Psoas muscle (tissue), 8 donors: ENCODE measurements at regions of chr2 and their contacts with region 1.

Region 1: GRCh38 chr2:121649596-121650314 is 493 bp upstream of the CLASP1 start:
- DNase-seq: peak; percentile 97 to 99
- ATAC-seq: peak; percentile 92 to 98 (median 95)
- H3K4me3 ChIP-seq: peak overlapping the region; percentile 87
- H3K27ac ChIP-seq: peak overlapping the region; percentile 96
- H3K4me1 ChIP-seq: peaks cover 49% of the 10 kb centered on the region
- H3K27me3 ChIP-seq: no peaks in the 10 kb centered on the region
- CTCF ChIP-seq: no peak

Region 2: DNA sequence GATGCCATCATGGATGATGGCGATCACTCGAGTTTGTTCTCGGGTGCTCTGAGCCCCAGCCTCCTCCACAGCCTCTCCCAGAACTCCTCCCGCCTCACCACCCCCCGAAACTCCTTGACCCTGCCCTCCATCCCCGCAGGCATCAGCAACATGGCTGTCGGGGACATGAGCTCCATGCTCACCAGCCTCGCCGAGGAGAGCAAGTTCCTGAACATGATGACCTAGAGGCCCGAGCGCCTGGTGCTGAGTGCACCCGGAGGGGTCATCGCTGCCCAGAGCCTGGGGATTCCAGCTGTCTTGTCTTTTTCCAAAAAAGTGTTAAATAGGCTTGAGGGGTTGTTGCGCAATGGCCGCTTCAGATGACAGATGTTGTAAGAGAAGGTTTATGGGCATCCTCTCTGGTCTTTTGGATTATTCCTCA is 659.3 kb before region 1 on chr2:
- intact Hi-C with region 1: no loop called
- DNase-seq: no peak
- ATAC-seq: peak in 2 of 4 donors; percentile 32 to 42
- H3K4me3 ChIP-seq: no peak overlapping the region
- H3K27ac ChIP-seq: no peak overlapping the region
- H3K4me1 ChIP-seq: no peaks in the 10 kb centered on the region
- H3K27me3 ChIP-seq: no peaks in the 10 kb centered on the region
- CTCF ChIP-seq: no peak

Region 3: DNA sequence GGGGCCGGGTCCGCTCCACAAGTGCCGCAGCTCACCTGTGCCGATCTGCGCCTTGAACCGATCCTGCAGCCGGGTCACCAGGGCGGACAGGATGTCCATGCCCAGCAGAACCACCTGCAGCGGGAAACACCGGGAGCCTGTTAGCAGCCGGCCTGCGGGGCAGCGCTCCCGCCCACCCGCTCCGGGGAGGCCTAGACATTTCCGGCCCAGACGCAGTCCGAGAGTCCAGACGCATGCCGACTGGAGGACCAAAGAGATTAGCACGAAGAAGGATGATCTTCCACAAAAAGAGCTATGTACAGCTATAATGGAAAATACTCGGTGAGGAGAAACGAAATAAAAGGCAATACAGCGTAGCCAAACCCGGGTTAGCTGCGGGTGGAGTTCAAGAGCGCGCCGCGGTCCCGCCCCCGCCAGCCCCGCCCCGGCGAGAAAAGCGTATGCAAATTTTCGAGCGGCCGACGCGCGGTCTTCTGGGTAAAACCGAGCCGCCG is 119.5 kb before region 1 on chr2:
- intact Hi-C with region 1: loop called (anchors 2 to 5 kb)
- DNase-seq: peak; percentile 84 to 92
- ATAC-seq: peak; percentile 77 to 83 (median 78)
- H3K4me3 ChIP-seq: peak overlapping the region; percentile 89
- H3K27ac ChIP-seq: peak overlapping the region; percentile 99
- H3K4me1 ChIP-seq: peaks cover 44% of the 10 kb centered on the region
- H3K27me3 ChIP-seq: no peaks in the 10 kb centered on the region
- CTCF ChIP-seq: no peak

Region 4: GRCh38 chr2:121565389-121566250 is 84.1 kb before region 1 on chr2:
- intact Hi-C with region 1: loop called in 1 of 2 experiments (anchors 5 kb)
- DNase-seq: peak; percentile 37 to 68
- ATAC-seq: peak; percentile 89 to 91 (median 90)
- H3K4me3 ChIP-seq: peak overlapping the region; percentile 43
- H3K27ac ChIP-seq: peak overlapping the region; percentile 84
- H3K4me1 ChIP-seq: peaks cover 95% of the 10 kb centered on the region
- H3K27me3 ChIP-seq: no peaks in the 10 kb centered on the region
- CTCF ChIP-seq: no peak

Region 5: DNA sequence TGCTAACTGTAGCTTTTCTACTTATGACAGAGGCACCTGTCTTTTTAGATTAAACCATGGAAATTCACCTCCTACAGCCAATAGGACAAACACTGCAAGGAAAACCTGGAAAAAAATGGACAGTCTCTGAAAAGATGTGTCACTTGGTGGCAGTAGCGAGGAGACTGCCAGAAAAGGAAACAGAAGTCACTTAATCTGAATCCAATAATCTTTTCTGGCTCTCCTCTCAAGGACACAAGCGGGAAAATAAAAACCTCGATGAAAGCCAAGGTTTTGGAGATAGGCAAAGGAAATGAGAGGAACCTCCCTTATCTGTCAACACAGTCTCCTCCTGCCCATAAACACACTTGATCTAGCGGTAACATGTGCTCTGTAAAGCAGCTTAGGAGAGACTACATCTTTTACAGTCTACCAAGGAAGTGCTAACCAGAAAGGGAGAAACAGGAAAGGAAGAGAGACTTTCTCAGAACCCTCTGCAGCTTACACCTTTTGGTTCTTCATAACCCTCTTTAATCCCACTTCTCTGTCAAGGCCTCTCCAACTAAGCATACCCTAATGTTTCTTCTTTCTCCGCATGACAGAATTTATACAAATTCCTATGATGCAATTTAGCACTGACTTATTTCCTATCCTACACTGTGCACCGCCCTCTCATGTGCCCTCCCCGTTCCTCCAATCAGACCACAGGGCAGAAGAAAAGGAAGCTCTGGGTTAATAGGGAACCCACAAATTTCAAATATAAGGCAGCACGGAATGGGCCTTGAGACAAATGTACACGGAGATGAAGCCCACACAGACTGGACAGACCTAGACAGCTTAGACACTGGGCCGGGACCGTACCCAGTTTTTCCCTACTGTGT is 53.3 kb before region 1 on chr2:
- intact Hi-C with region 1: loop called in 1 of 2 experiments (anchors 5 kb)
- DNase-seq: no peak
- ATAC-seq: peak; percentile 63 to 78 (median 66)
- H3K4me3 ChIP-seq: peak overlapping the region; percentile 47
- H3K27ac ChIP-seq: peak overlapping the region; percentile 82
- H3K4me1 ChIP-seq: peaks cover 56% of the 10 kb centered on the region
- H3K27me3 ChIP-seq: no peaks in the 10 kb centered on the region
- CTCF ChIP-seq: peak; percentile 59

Region 6: GRCh38 chr2:121722479-121722878 is 72.7 kb after region 1 on chr2:
- intact Hi-C with region 1: loop called (anchors 1 to 5 kb)
- DNase-seq: no peak
- ATAC-seq: peak; percentile 85 to 93 (median 92)
- H3K4me3 ChIP-seq: no peak overlapping the region
- H3K27ac ChIP-seq: peak overlapping the region; percentile 75
- H3K4me1 ChIP-seq: peaks cover 19% of the 10 kb centered on the region
- H3K27me3 ChIP-seq: no peaks in the 10 kb centered on the region
- CTCF ChIP-seq: no peak